ENCODE measurements at regions of chr16 and their contacts with region 1.

Region 1: DNA sequence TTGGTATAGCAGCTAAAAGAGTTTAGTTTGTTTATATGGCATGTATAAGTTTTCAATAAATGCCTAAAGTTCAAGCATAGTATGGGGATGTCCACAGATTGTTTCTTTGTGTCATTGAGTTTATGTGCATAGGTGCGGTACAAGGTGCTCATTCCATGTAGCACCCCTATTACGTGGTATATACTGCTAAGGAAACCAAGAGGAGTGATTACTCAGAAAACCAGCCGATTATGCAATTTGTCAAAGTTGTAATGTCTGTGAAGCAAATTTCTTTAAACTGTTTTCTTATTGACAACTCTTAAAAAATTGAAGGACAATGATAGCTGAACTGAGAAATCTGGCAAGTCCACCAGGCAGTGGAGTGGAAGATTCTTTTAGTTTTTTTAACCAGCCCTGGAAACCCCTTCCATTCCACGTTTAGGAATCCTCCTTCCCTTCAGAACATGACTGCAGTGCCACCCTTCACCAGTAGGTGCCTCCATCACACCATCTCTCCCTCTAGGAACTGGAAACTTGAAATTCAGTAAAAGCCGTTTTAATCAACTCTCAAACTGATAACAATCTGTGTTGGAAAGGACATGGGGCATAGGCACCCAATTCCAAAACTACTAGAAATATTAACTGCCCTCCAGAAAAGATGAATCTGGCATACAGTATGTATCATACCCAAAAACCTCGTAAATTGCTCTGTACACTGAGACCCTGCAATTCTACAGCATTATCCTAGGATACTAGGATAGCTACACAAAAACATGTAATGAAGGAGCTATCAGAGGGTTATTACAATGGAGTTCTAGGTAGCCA is 43.5 kb downstream of the REXO5 start:
- DNase-seq: peak; percentile 75 to 81
- H3K4me3 ChIP-seq: no peak overlapping the region
- H3K27ac ChIP-seq: peak overlapping the region in 2 of 3 donors; percentile 75 to 83
- H3K4me1 ChIP-seq: peaks cover 37 to 41% of the 10 kb centered on the region in 2 donors
- H3K27me3 ChIP-seq: no peaks in the 10 kb centered on the region
- CTCF ChIP-seq: peak; percentile 90 to 98 (median 96)
- POLR2A ChIP-seq: no peak

Region 2: GRCh38 chr16:20763461-20764232 is 86.1 kb before region 1 on chr16 and contains the start of gene ACSM3:
- intact Hi-C with region 1: no loop called
- DNase-seq: peak; percentile 59 to 63
- H3K4me3 ChIP-seq: peak within 1 kb of the TSS in 2 of 3 donors; percentile 10 to 12
- H3K27ac ChIP-seq: peak within 1 kb of the TSS in 1 of 3 donors; percentile 48
- H3K4me1 ChIP-seq: peaks cover 0 to 4% of the 10 kb centered on the region in 2 donors
- H3K27me3 ChIP-seq: no peaks in the 10 kb centered on the region
- CTCF ChIP-seq: no peak
- POLR2A ChIP-seq: no peak
- total RNA-seq, gene ACSM3: 1.2 to 1.7 (median 1.6) TPM in 3 of 4 donors, not detected in the other

Region 3: GRCh38 chr16:20879175-20880040 is 29.6 kb after region 1 on chr16:
- intact Hi-C with region 1: no loop called
- DNase-seq: no peak
- H3K4me3 ChIP-seq: no peak overlapping the region
- H3K27ac ChIP-seq: peak overlapping the region; percentile 41 to 60 (median 56)
- H3K4me1 ChIP-seq: peaks cover 34 to 74% of the 10 kb centered on the region in 2 donors
- H3K27me3 ChIP-seq: no peaks in the 10 kb centered on the region
- CTCF ChIP-seq: no peak
- POLR2A ChIP-seq: no peak

Region 4: GRCh38 chr16:20900299-20901067 is 50.7 kb after region 1 on chr16 and contains the starts of genes DCUN1D3 and LYRM1:
- intact Hi-C with region 1: loop called (anchors 10 kb)
- DNase-seq: peak; percentile 97 to 98
- H3K4me3 ChIP-seq: peak within 1 kb of the TSS; percentile 60 to 89 (median 63)
- H3K27ac ChIP-seq: peak within 1 kb of the TSS; percentile 92 to 97 (median 95)
- H3K4me1 ChIP-seq: peaks cover 15 to 50% of the 10 kb centered on the region in 2 donors
- H3K27me3 ChIP-seq: no peaks in the 10 kb centered on the region
- CTCF ChIP-seq: no peak
- POLR2A ChIP-seq: peak; percentile 68 to 90
- total RNA-seq, gene DCUN1D3: 10.3 to 13.7 (median 11.8) TPM
- total RNA-seq, gene LYRM1: 32.8 to 43.7 (median 41.0) TPM

Region 5: DNA sequence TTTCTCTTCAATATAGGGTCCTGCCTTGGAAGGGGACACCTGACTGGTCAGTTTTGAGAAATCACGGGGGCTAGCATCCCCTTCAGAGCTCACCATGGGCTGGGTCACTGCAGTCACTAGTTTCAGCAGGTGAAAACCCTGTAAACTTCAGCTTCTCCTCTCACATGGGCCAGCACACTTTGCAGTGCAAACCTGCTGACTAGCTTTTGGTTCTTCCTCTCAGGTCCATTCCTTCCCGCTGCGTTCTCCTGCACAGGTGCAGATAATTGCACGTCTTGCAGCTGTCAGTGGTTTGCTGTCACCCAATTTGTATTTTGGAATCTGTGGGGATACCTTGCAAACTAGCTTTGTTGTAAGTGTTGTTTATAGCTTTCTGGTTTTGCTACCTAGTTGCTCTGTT is 145.9 kb after region 1 on chr16:
- intact Hi-C with region 1: loop called (anchors 10 kb)
- DNase-seq: no peak
- H3K4me3 ChIP-seq: no peak overlapping the region
- H3K27ac ChIP-seq: no peak overlapping the region
- H3K4me1 ChIP-seq: no peaks in the 10 kb centered on the region
- H3K27me3 ChIP-seq: no peaks in the 10 kb centered on the region
- CTCF ChIP-seq: no peak
- POLR2A ChIP-seq: no peak

Region 6: DNA sequence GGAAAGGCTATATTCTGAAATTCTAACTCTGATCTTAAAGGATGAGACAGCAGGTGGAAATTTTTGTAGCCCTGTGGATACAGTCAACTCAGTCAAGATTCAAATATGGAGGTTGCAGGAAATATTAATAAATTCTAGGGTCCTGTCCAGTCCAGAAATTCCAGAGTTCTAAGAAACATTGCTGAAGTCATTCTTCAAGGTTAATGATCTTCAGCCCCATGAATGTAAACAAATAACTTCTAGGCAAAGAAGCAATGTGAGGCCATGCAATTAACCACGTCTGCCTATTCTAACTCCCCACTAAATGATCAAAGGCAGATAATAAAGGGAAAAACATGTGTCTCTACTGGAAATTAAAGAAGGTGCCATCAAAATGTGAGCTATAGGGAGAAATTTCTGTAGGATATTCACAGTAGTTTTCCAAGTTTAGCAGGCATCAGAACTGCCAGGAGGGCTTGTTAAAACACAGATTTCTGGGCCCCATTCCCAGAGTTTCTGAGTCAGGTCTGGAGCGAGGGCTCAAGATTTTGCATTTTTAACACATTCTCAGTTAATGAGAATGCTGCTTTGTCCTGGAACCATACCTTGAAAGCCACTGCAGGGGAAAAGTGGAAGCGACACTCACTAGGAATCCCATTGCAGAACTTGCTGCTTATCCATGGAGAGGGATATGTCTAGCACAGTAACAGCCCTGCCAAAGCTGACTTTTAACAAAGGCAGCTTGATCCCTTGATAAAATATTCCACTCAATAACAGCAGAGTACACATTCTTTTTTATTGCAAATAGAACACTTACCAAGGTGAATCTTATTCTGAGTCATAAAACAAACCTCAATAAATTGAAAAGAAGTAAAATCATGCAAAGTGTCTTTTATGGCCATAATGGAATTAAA is 239.1 kb after region 1 on chr16:
- intact Hi-C with region 1: loop called (anchors 5 kb)
- DNase-seq: no peak
- H3K4me3 ChIP-seq: no peak overlapping the region
- H3K27ac ChIP-seq: no peak overlapping the region
- H3K4me1 ChIP-seq: no peaks in the 10 kb centered on the region
- H3K27me3 ChIP-seq: no peaks in the 10 kb centered on the region
- CTCF ChIP-seq: no peak
- POLR2A ChIP-seq: no peak

Region 7: DNA sequence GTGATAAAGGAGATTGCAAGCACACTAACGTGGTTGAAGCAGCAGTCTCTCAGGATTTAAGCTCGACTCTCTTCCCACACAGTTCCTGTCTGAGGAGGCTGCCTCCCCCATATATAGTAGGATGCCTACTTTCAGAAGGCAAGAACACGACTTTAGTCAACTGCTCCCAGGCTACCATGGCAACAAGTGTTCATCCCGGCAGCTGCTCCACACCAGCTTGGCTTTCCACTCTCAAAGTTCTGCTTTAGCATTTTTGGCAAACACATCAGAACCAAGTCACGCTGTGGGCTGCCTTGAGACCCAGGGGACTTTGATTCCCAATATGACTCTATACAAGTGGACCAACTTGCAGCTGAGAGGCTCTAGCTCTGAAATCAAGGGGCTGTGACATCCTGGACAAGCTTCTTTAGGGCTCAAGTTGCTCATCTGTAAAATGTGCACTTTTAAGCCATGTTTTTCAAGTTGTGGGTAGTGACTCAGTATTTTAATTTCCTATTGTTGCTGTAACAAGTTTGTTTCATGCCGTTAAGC is 345.0 kb after region 1 on chr16:
- intact Hi-C with region 1: no loop called
- DNase-seq: peak; percentile 4 to 21
- H3K4me3 ChIP-seq: no peak overlapping the region
- H3K27ac ChIP-seq: no peak overlapping the region
- H3K4me1 ChIP-seq: no peaks in the 10 kb centered on the region
- H3K27me3 ChIP-seq: no peaks in the 10 kb centered on the region
- CTCF ChIP-seq: no peak
- POLR2A ChIP-seq: no peak